CD14-positive monocyte (primary cell): ENCODE measurements at regions of chr14 and their contacts with region 1.

Region 1: DNA sequence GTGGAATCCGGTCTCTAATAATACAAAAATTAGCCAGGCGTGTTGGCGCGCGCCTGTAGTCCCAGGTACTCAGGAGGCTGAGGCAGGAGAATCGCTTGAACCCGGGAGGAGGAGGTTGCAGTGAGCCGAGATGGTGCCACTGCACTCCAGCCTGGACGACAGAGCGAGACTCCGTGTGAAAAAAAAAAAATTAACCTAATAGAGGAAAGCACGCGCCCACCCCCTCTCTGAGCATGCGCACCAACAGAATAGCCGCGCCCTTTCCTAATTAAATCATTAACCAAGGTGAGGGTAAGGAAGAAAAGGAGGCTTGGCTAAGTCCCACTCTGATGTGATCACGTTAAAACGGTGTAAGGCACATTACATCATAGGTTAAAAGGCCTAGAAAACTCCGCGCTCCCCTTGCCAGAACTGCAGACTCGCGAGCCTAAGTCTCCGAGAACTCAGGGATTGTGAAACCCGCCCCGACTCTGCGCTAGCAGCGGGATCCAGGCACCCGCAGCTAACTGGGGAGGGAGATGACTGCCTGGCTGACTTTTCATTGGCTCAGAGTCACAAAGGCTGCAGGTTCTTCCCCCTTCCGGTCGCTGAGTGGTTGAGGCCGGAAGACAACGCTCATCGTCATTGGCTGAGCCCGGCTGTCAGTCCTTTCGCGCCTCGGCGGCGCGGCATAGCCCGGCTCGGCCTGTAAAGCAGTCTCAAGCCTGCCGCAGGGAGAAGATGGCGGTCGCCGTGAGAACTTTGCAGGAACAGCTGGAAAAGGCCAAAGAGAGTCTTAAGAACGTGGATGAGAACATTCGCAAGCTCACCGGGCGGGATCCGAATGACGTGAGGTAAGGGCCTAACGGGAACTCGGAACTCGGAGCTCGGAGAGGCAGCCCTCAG is at the start of gene PNN:
- DNase-seq: peak; percentile 99
- H3K4me3 ChIP-seq: peak within 1 kb of the TSS; percentile 87 to 99 (median 94)
- H3K4me3 Mint-ChIP-seq: peak within 1 kb of the TSS; percentile 99 to 100
- H3K27ac ChIP-seq: peak within 1 kb of the TSS; percentile 93 to 98
- H3K27ac Mint-ChIP-seq: peak within 1 kb of the TSS; percentile 96 to 100 (median 99)
- H3K4me1 ChIP-seq: peaks cover 18 to 28% of the 10 kb centered on the region in 2 donors
- H3K4me1 Mint-ChIP-seq: peaks cover 17% of the 10 kb centered on the region
- H3K27me3 ChIP-seq: no peaks in the 10 kb centered on the region
- H3K27me3 Mint-ChIP-seq: no peaks in the 10 kb centered on the region
- CTCF ChIP-seq: no peak
- polyA plus RNA-seq, gene PNN: 4.7 to 34.9 (median 9.0) TPM

Region 2: GRCh38 chr14:39102969-39103957 is 71.5 kb before region 1 on chr14 and contains the start of gene SEC23A:
- intact Hi-C with region 1: loop called (anchors 5 kb)
- DNase-seq: peak; percentile 70 to 82 (median 81)
- H3K4me3 ChIP-seq: peak within 1 kb of the TSS; percentile 83 to 93 (median 85)
- H3K4me3 Mint-ChIP-seq: peak within 1 kb of the TSS; percentile 93 to 94
- H3K27ac ChIP-seq: peak within 1 kb of the TSS; percentile 81 to 93
- H3K27ac Mint-ChIP-seq: peak within 1 kb of the TSS; percentile 87 to 95 (median 93)
- H3K4me1 ChIP-seq: peaks cover 11 to 18% of the 10 kb centered on the region in 2 donors
- H3K4me1 Mint-ChIP-seq: peaks cover 25% of the 10 kb centered on the region
- H3K27me3 ChIP-seq: no peaks in the 10 kb centered on the region
- H3K27me3 Mint-ChIP-seq: peaks cover 0 to 2% (median 0%) of the 10 kb centered on the region in 3 donors
- CTCF ChIP-seq: no peak
- polyA plus RNA-seq, gene SEC23A: 13.8 to 37.3 (median 36.4) TPM

Region 3: DNA sequence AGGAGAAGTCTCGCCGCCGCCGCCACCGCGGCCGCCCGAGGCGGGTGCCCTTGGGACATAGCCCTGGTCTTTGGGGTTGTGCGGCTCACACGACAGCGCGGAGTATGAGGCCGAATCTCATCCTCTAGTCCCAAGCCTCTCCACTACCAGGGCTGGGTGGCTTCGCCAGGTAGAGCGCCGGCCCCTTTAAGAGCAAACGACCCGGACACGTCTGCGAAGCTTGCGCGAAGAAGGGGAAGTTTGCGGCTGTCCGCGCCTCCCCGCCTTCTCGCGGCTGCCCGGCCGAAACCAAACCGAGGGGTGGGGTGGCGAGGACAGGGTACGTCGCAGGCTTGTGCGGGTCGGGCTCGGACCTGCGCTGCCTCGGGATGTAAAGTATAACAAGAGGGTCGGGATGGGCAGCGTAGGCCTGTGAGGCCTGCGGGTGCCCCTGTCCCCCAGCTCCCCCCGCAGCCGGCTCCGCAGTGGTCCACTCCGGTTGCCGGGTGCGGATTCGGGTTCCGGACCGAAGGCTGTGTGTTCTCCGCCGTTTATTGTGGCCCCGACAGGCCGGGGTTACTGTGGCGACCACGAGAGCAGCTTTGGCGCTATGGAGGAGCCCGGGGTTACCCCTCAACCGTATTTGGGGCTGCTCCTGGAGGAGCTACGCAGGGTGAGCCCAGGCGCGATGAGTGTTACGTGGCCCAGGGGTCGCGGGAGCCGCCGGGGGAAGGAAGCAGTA is 92.2 kb after region 1 on chr14:
- intact Hi-C with region 1: loop called (anchors 2 to 5 kb)
- DNase-seq: peak; percentile 70 to 82 (median 75)
- H3K4me3 ChIP-seq: peak overlapping the region; percentile 91 to 98 (median 93)
- H3K4me3 Mint-ChIP-seq: peak overlapping the region; percentile 94 to 97
- H3K27ac ChIP-seq: peak overlapping the region; percentile 95 to 96
- H3K27ac Mint-ChIP-seq: peak overlapping the region; percentile 96 to 98 (median 97)
- H3K4me1 ChIP-seq: peaks cover 27 to 44% of the 10 kb centered on the region in 2 donors
- H3K4me1 Mint-ChIP-seq: peaks cover 48% of the 10 kb centered on the region
- H3K27me3 ChIP-seq: no peaks in the 10 kb centered on the region
- H3K27me3 Mint-ChIP-seq: no peaks in the 10 kb centered on the region
- CTCF ChIP-seq: no peak

Region 4: DNA sequence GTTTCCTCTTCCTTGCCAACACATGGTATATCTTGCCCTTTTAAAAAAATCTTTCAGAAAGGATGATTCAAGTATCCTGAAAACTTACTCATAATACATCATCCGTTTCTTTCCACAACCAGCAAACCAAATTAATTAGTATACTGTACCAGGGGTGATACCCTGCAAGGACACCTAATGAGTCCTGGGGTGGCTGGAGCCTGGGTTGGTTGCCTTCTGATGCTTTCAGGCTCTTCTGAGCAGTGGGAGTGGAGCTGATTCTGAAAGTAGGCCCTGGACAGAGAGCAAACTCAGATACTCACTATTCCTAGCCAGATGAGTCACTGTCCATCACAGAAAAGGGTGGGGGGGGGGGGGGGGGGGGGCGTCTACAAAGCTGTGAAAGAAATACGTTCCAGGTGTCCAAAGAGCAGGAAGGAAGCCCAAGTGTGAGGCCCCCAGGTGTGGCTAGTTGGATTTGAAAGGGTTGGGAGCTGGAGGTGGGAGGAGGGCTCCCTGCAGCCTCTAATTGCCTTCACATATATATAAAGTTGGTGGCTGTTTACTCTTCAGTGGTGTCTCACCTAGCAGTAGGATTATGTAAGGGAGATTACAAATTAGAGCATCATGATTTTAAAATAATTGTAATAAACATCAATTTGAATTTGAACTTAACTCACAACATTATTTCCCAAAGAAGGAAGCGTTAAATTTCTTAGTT is 220.9 kb after region 1 on chr14:
- intact Hi-C with region 1: no loop called
- DNase-seq: no peak
- H3K4me3 ChIP-seq: no peak overlapping the region
- H3K4me3 Mint-ChIP-seq: no peak overlapping the region
- H3K27ac ChIP-seq: no peak overlapping the region
- H3K27ac Mint-ChIP-seq: peak overlapping the region in 1 of 7 donors; percentile 80
- H3K4me1 ChIP-seq: no peaks in the 10 kb centered on the region
- H3K4me1 Mint-ChIP-seq: no peaks in the 10 kb centered on the region
- H3K27me3 ChIP-seq: no peaks in the 10 kb centered on the region
- H3K27me3 Mint-ChIP-seq: no peaks in the 10 kb centered on the region
- CTCF ChIP-seq: no peak

Region 5: DNA sequence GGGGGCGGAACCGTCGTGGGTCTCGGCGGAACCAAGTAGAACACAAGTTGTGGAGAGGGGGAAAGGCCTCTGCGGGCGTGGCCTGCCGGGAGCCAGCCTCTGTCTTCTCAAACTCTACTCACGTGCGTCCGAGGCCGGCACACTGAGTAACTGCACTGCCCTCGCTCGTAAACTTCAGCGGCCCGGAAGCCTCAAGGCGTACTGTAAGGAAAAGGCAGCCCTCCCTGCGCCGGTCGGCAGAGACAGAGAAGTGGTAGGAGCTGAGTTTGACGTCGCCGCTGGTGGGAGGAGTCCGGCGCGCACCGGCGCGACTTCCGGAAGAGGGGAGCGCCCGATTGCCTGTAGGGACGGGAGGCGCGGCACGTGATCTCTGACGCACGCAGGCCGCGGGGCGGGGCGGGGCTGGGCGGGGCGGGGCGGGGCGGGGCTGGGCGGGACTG is 257.4 kb after region 1 on chr14 and contains the start of gene FBXO33:
- intact Hi-C with region 1: loop called (anchors 5 kb)
- DNase-seq: peak; percentile 92 to 98 (median 97)
- H3K4me3 ChIP-seq: peak within 1 kb of the TSS; percentile 88 to 98 (median 96)
- H3K4me3 Mint-ChIP-seq: peak within 1 kb of the TSS; percentile 98 to 99
- H3K27ac ChIP-seq: peak within 1 kb of the TSS; percentile 96 to 100
- H3K27ac Mint-ChIP-seq: peak within 1 kb of the TSS; percentile 100
- H3K4me1 ChIP-seq: peaks cover 27 to 36% of the 10 kb centered on the region in 2 donors
- H3K4me1 Mint-ChIP-seq: peaks cover 45% of the 10 kb centered on the region
- H3K27me3 ChIP-seq: no peaks in the 10 kb centered on the region
- H3K27me3 Mint-ChIP-seq: peaks cover 0 to 1% (median 0%) of the 10 kb centered on the region in 3 donors
- CTCF ChIP-seq: no peak
- polyA plus RNA-seq, gene FBXO33: 9.0 to 14.8 (median 14.1) TPM